Psoas muscle (tissue), 8 donors: ENCODE measurements at regions of chr5 and their contacts with region 1.

Region 1: DNA sequence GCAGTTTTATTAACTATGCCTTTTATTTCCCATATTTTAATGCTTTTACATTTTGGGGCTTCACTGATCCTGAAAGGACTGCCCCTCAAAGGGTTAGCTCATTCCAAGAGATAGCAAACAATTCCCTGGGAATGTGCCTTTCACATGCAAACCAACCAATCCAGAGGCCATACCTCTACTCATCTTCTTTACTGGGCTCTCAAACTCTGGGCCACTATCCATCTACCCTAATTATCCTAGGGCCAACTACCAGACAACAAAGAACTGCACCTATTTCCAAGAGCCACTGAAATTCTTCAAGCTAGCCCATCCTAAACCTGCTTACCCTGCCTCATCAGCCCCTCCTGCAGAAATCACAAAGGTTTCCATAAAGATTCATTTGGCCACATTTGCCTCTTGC is 364.7 kb downstream of the CDH12 start:
- DNase-seq: no peak
- ATAC-seq: no peak
- H3K4me3 ChIP-seq: no peak overlapping the region
- H3K27ac ChIP-seq: no peak overlapping the region
- H3K4me1 ChIP-seq: no peaks in the 10 kb centered on the region
- H3K27me3 ChIP-seq: no peaks in the 10 kb centered on the region
- CTCF ChIP-seq: no peak

Region 2: DNA sequence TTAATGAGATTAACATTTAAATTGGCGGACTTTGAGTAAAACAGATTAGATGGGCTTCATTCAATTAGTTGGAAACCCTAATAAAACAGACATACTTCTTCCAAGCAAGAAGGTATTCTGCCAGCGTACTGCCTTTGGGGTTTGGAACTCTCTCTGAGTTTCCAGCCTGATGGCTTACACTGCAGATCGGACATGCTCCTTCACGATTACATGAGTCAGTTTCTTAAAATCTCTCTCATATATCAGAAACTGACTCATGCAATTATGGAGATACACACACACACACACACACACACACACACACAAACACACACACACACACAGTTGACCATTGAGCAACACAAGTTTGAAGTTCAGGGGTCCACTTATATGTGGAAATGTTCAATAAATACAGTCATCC is 424.7 kb before region 1 on chr5:
- intact Hi-C with region 1: loop called in 1 of 2 experiments (anchors 10 kb)
- DNase-seq: no peak
- ATAC-seq: no peak
- H3K4me3 ChIP-seq: no peak overlapping the region
- H3K27ac ChIP-seq: no peak overlapping the region
- H3K4me1 ChIP-seq: no peaks in the 10 kb centered on the region
- H3K27me3 ChIP-seq: no peaks in the 10 kb centered on the region
- CTCF ChIP-seq: no peak

Region 3: DNA sequence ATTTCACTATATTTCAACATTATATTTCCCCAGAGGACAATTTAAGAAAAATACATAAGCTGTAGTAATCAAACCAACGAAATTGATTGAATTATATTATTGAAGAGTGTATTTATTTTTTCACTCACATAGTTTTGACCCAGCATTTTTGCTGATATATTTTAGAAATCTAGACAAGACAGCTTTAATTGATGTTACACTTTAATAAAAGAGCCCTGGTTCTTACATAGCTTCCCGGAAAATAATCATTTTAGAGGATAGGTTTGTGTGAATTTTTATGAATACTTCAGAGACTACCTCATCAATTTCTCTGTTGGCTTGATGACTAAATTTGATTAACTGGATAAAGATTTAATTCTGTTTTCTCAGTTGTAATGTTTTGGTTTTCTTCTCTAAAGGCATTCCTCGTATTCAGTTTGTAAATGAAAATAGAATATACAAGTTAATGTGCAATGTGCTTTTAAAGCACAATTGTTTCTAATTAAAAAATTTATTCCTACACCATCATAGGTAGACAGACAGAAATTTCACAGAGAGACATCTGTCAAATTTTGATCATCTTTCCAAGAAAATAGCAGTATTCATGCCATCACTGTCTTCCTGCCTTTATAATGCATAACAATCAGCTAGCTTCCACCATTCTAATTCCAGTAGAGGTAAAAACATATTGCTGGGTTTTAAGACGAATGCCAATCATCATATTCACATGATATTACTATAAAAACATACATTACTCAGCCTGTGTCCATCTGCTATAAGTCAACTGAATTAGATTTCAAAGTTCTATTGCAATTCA is 76.7 kb before region 1 on chr5:
- intact Hi-C with region 1: no loop called
- DNase-seq: no peak
- ATAC-seq: no peak
- H3K4me3 ChIP-seq: no peak overlapping the region
- H3K27ac ChIP-seq: no peak overlapping the region
- H3K4me1 ChIP-seq: no peaks in the 10 kb centered on the region
- H3K27me3 ChIP-seq: no peaks in the 10 kb centered on the region
- CTCF ChIP-seq: no peak